Prostate gland (tissue), 2 donors: ENCODE measurements at regions of chr22 and their contacts with region 1.

Region 1: GRCh38 chr22:24106385-24107381 is 74.6 kb upstream of the SUSD2 start:
- DNase-seq: no peak
- H3K4me3 ChIP-seq: no peak overlapping the region
- H3K27ac ChIP-seq: peak overlapping the region in 1 of 2 donors; percentile 48
- H3K4me1 ChIP-seq: no peaks in the 10 kb centered on the region
- H3K27me3 ChIP-seq: no peaks in the 10 kb centered on the region
- CTCF ChIP-seq: peak in 3 of 4 experiments; percentile 21 to 44 (median 26)
- POLR2A ChIP-seq: no peak

Region 2: GRCh38 chr22:24060375-24060788 is 46.3 kb before region 1 on chr22:
- intact Hi-C with region 1: no loop called
- DNase-seq: peak; percentile 51
- H3K4me3 ChIP-seq: no peak overlapping the region
- H3K27ac ChIP-seq: peak overlapping the region; percentile 31 to 38
- H3K4me1 ChIP-seq: peaks cover 5% of the 10 kb centered on the region
- H3K27me3 ChIP-seq: no peaks in the 10 kb centered on the region
- CTCF ChIP-seq: no peak
- POLR2A ChIP-seq: no peak

Region 3: DNA sequence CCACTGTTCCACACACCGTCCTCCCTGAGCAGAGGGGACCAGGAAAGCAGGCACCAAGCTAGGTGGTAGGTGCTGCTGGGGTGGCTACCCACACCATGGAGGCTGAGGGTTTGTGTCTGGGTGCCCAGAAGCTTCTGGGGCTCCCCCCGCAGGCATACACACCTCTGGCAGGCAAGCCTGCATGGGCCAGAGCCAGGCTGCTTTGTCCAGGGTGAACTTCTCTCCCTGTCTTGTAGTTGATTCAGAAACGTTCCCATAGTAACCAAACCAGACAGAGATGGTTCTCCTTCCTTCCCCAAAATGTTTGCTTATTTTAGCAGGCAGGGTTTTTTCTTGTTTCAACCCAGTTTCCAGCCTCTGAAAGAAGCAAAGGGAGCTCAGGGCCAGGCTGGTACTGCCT is 33.7 kb after region 1 on chr22:
- intact Hi-C with region 1: loop called (anchors 5 kb)
- DNase-seq: no peak
- H3K4me3 ChIP-seq: no peak overlapping the region
- H3K27ac ChIP-seq: no peak overlapping the region
- H3K4me1 ChIP-seq: peaks cover 7% of the 10 kb centered on the region
- H3K27me3 ChIP-seq: no peaks in the 10 kb centered on the region
- CTCF ChIP-seq: no peak
- POLR2A ChIP-seq: no peak

Region 4: GRCh38 chr22:24175160-24175808 is 68.6 kb after region 1 on chr22:
- intact Hi-C with region 1: loop called (anchors 5 kb)
- DNase-seq: peak; percentile 73
- H3K4me3 ChIP-seq: no peak overlapping the region
- H3K27ac ChIP-seq: peak overlapping the region in 1 of 2 donors; percentile 31
- H3K4me1 ChIP-seq: no peaks in the 10 kb centered on the region
- H3K27me3 ChIP-seq: no peaks in the 10 kb centered on the region
- CTCF ChIP-seq: peak; percentile 48 to 90 (median 86)
- POLR2A ChIP-seq: no peak